ENCODE measurements at regions of chr13 and their contacts with region 1.

Region 1: GRCh38 chr13:48859272-48860105 is 116.2 kb upstream of the FNDC3A start:
- DNase-seq: peak; percentile 57 to 77 (median 69)
- H3K4me3 ChIP-seq: peak overlapping the region in 2 of 3 experiments; percentile 9 to 61
- H3K4me3 Mint-ChIP-seq: peak overlapping the region in 1 of 2 donors; percentile 59
- H3K27ac ChIP-seq: peak overlapping the region; percentile 28 to 82
- H3K27ac Mint-ChIP-seq: peak overlapping the region; percentile 82 to 90 (median 87)
- H3K4me1 ChIP-seq: peaks cover 56 to 60% of the 10 kb centered on the region in 2 donors
- H3K4me1 Mint-ChIP-seq: peaks cover 46% of the 10 kb centered on the region
- H3K27me3 ChIP-seq: no peaks in the 10 kb centered on the region
- H3K27me3 Mint-ChIP-seq: no peaks in the 10 kb centered on the region
- CTCF ChIP-seq: no peak

Region 2: GRCh38 chr13:47650209-47650608 is 1209.3 kb before region 1 on chr13:
- intact Hi-C with region 1: no loop called
- DNase-seq: no peak
- H3K4me3 ChIP-seq: no peak overlapping the region
- H3K4me3 Mint-ChIP-seq: no peak overlapping the region
- H3K27ac ChIP-seq: no peak overlapping the region
- H3K27ac Mint-ChIP-seq: no peak overlapping the region
- H3K4me1 ChIP-seq: no peaks in the 10 kb centered on the region
- H3K4me1 Mint-ChIP-seq: no peaks in the 10 kb centered on the region
- H3K27me3 ChIP-seq: no peaks in the 10 kb centered on the region
- H3K27me3 Mint-ChIP-seq: peaks cover 0 to 3% (median 2%) of the 10 kb centered on the region in 3 donors
- CTCF ChIP-seq: no peak

Region 3: GRCh38 chr13:48783181-48783630 is 76.3 kb before region 1 on chr13:
- intact Hi-C with region 1: loop called in 1 of 2 experiments (anchors 2 kb)
- DNase-seq: peak; percentile 98 to 99 (median 98)
- H3K4me3 ChIP-seq: peak overlapping the region in 1 of 3 experiments; percentile 18
- H3K4me3 Mint-ChIP-seq: peak overlapping the region; percentile 35 to 39
- H3K27ac ChIP-seq: peak overlapping the region; percentile 73 to 92
- H3K27ac Mint-ChIP-seq: peak overlapping the region; percentile 94 to 99 (median 98)
- H3K4me1 ChIP-seq: peaks cover 21 to 26% of the 10 kb centered on the region in 2 donors
- H3K4me1 Mint-ChIP-seq: peaks cover 32% of the 10 kb centered on the region
- H3K27me3 ChIP-seq: no peaks in the 10 kb centered on the region
- H3K27me3 Mint-ChIP-seq: peaks cover 0 to 2% (median 0%) of the 10 kb centered on the region in 3 donors
- CTCF ChIP-seq: peak; percentile 12

Region 4: DNA sequence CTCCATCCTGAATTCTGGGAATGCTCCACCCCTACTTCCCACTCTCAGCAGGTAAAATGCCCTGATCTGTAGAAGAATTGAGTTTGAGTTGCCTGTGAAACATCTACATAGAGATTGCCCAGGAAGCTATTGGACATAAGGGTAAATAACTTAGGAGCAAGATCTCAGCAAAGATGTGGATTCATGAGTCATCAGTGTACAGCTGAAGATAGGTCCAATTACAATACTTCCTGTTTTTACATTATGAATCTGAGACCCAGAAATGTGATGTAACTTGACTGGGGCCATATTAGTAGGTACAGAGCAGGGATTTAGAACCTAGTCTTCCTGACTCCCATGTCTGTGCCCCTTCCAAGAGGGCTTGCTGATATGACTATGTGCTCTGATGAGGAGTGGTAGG is 36.8 kb after region 1 on chr13:
- intact Hi-C with region 1: loop called in 1 of 2 experiments (anchors 5 kb)
- DNase-seq: peak; percentile 61 to 86 (median 85)
- H3K4me3 ChIP-seq: no peak overlapping the region
- H3K4me3 Mint-ChIP-seq: no peak overlapping the region
- H3K27ac ChIP-seq: no peak overlapping the region
- H3K27ac Mint-ChIP-seq: peak overlapping the region in 5 of 7 donors; percentile 7 to 74 (median 38)
- H3K4me1 ChIP-seq: peaks cover 25 to 32% of the 10 kb centered on the region in 2 donors
- H3K4me1 Mint-ChIP-seq: peaks cover 35% of the 10 kb centered on the region
- H3K27me3 ChIP-seq: no peaks in the 10 kb centered on the region
- H3K27me3 Mint-ChIP-seq: no peaks in the 10 kb centered on the region
- CTCF ChIP-seq: no peak

Measured in CD14-positive monocyte (primary cell).